T-cell (primary cell): ENCODE measurements at regions of chr21 and their contacts with region 1.

Region 1: DNA sequence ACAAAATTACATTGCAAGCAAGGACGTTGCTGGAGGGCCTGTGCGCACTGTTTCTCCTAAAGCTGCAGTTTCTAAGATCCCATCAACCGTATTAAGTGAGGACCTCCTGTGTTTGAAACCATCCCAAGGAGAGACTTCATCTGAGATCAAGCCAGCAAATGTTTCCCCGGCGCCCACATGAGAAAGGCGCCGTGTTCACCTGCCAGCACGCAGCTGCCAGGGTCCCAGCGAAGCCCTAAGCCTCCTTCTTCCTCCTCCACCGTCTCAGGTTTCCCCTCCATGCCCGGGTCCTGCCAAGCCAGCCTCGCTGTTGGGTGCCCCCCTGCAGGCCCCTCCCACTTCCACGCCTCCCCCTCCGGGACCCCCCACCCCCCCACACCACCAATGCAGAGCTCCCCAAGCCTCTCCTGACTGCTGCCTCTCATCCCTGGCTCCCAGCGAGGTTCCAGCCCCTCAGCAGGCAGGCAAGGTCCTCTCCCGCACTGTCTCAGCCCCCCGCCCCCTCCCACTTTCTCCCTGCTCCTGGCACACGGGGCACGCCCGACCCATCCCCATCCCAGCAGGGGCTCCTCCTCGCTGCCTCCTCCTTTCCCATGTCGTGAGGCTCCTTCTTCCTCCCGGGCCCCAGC is 8.6 kb upstream of the TFF1 start:
- DNase-seq: no peak
- ATAC-seq: no peak
- H3K4me3 ChIP-seq: no peak overlapping the region
- H3K4me3 Mint-ChIP-seq: peak overlapping the region in 1 of 3 donors; percentile 17
- H3K27ac ChIP-seq: no peak overlapping the region
- H3K27ac Mint-ChIP-seq: no peak overlapping the region
- H3K4me1 ChIP-seq: peaks cover 5 to 8% of the 10 kb centered on the region in 2 experiments
- H3K4me1 Mint-ChIP-seq: peaks cover 10 to 14% (median 12%) of the 10 kb centered on the region in 3 donors
- H3K27me3 ChIP-seq: peaks cover 0 to 37% of the 10 kb centered on the region in 2 experiments
- H3K27me3 Mint-ChIP-seq: peaks cover 0 to 2% of the 10 kb centered on the region in 2 donors

Region 2: DNA sequence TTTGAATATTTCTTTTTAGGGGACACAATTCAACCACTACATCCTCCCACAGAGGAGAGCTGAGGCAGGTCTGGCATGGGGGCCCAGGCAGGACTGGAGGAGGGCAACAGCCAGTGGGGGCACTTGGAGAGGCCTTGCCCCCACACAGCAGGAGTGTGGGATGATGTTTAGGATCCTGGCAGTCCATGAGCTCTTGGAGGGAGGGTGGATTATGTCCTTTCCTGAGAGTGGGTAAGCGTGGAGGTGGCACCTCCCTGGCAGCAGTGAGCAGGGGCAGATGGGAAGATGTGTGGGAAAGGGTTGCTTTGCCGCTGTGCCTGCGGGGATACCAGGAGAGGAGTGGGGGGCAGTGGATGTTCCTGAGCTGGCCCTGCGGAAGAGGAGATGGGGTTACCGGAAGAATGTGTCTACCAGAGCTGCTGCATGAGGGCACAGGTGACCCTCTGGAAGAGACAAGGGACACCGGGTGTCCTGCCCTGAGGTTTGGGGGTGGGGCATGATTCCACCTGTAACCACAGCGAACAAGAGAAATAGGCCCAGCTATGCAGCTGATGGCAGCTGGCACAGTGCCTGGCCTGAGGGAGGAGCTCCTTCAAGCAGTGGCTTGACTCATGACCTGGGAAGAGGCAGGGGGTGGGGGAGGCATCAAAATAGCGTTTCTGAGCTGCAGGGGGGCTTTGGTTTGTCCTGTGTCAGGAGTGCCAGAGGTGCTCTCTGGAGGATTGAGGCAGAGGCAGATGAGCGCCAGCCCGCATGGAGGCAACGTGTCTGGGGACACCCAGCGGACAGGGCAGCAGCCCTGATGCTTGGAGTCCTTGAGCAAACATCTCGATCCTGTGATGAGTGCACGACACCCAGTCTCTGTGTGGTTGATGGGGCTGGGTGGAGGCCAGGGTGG is 743.2 kb before region 1 on chr21:
- CTCF ChIA-PET with region 1: no interaction called
- POLR2A ChIA-PET with region 1: interaction called in 1 of 2 experiments, 12 read pairs
- DNase-seq: no peak
- ATAC-seq: no peak
- H3K4me3 ChIP-seq: no peak overlapping the region
- H3K4me3 Mint-ChIP-seq: no peak overlapping the region
- H3K27ac ChIP-seq: no peak overlapping the region
- H3K27ac Mint-ChIP-seq: no peak overlapping the region
- H3K4me1 ChIP-seq: no peaks in the 10 kb centered on the region
- H3K4me1 Mint-ChIP-seq: no peaks in the 10 kb centered on the region
- H3K27me3 ChIP-seq: peaks cover 0 to 23% of the 10 kb centered on the region in 2 experiments
- H3K27me3 Mint-ChIP-seq: peaks cover 16 to 20% of the 10 kb centered on the region in 2 donors

Region 3: DNA sequence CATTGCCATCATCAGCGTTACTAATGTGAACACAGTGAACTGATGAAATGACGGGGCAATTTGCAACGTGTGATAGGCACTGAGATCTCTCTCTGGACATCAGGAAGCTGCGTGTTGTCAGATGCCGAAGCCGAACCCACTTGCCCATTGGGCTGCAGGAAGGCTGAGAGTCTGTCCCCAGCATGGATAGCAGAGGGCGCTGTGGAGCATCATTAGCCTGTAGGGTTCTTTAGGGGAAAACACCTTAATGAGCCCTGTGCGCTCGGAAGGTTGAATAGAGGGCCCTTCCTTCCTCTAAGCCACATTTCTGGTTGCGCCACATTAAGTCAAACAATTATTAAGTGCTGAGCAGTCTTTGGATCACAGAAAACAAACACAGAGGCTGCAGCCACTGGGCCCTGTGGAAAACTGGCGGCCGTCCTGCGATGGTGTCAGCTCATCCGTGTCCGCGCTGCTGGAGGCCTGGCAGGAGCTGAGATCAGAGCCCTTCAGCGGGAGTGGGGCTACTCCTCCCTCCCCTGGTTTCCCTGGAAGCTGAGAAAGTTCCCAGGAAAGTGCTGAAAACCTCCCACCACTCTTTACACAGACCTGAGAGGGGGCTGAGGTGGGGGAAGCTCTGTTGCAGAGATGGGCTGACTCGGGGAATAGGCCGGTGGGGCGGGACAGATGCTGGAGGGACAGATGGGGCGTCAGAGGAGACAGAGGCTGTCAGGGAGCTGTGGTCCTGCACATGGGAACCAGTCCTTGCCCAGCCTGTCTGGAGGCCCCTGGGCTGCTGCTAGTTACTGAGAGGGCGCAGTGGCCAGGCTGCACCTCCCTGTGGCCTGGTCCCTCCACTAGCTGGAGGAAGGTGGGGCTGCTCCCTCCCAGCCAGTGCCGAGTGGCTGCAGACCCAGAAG is 36.9 kb before region 1 on chr21:
- CTCF ChIA-PET with region 1: no interaction called
- POLR2A ChIA-PET with region 1: no interaction called
- DNase-seq: peak; percentile 64 to 93 (median 82)
- ATAC-seq: peak; percentile 98 to 100 (median 99)
- H3K4me3 ChIP-seq: no peak overlapping the region
- H3K4me3 Mint-ChIP-seq: peak overlapping the region in 2 of 3 donors; percentile 32 to 37
- H3K27ac ChIP-seq: no peak overlapping the region
- H3K27ac Mint-ChIP-seq: peak overlapping the region; percentile 52
- H3K4me1 ChIP-seq: peaks cover 3 to 10% of the 10 kb centered on the region in 2 experiments
- H3K4me1 Mint-ChIP-seq: peaks cover 8 to 14% (median 10%) of the 10 kb centered on the region in 3 donors
- H3K27me3 ChIP-seq: peaks cover 0 to 4% of the 10 kb centered on the region in 2 experiments
- H3K27me3 Mint-ChIP-seq: peaks cover 0 to 2% of the 10 kb centered on the region in 2 donors

Region 4: GRCh38 chr21:42384989-42385388 is 10.0 kb after region 1 on chr21:
- CTCF ChIA-PET with region 1: no interaction called
- POLR2A ChIA-PET with region 1: no interaction called
- DNase-seq: no peak
- ATAC-seq: no peak
- H3K4me3 ChIP-seq: no peak overlapping the region
- H3K4me3 Mint-ChIP-seq: peak overlapping the region in 1 of 3 donors; percentile 60
- H3K27ac ChIP-seq: no peak overlapping the region
- H3K27ac Mint-ChIP-seq: peak overlapping the region; percentile 36 to 85
- H3K4me1 ChIP-seq: peaks cover 24 to 36% of the 10 kb centered on the region in 2 experiments
- H3K4me1 Mint-ChIP-seq: peaks cover 25 to 59% (median 56%) of the 10 kb centered on the region in 3 donors
- H3K27me3 ChIP-seq: peaks cover 0 to 4% of the 10 kb centered on the region in 2 experiments
- H3K27me3 Mint-ChIP-seq: no peaks in the 10 kb centered on the region